ENCODE measurements at regions of chr15 and their contacts with region 1.

Region 1: GRCh38 chr15:45611305-45611704 is 23.5 kb upstream of the SQOR start:
- DNase-seq: no peak
- ATAC-seq: no peak
- H3K4me3 ChIP-seq: no peak overlapping the region
- H3K27ac ChIP-seq: no peak overlapping the region
- H3K4me1 ChIP-seq: no peaks in the 10 kb centered on the region
- H3K27me3 ChIP-seq: no peaks in the 10 kb centered on the region

Region 2: GRCh38 chr15:45522328-45523160 is 88.8 kb before region 1 on chr15 and contains the start of gene SLC30A4:
- intact Hi-C with region 1: loop called (anchors 5 to 10 kb)
- DNase-seq: peak; percentile 78 to 88
- ATAC-seq: peak; percentile 92
- H3K4me3 ChIP-seq: peak within 1 kb of the TSS; percentile 76 to 95
- H3K27ac ChIP-seq: peak within 1 kb of the TSS in 1 of 2 donors; percentile 43
- H3K4me1 ChIP-seq: peaks cover 0 to 2% of the 10 kb centered on the region in 2 donors
- H3K27me3 ChIP-seq: no peaks in the 10 kb centered on the region
- total RNA-seq, gene SLC30A4: 8.2 to 10.2 TPM

Region 3: GRCh38 chr15:45648521-45649200 is 37.4 kb after region 1 on chr15:
- intact Hi-C with region 1: no loop called
- DNase-seq: no peak
- ATAC-seq: no peak
- H3K4me3 ChIP-seq: no peak overlapping the region
- H3K27ac ChIP-seq: no peak overlapping the region
- H3K4me1 ChIP-seq: peaks cover 9 to 10% of the 10 kb centered on the region in 2 donors
- H3K27me3 ChIP-seq: no peaks in the 10 kb centered on the region

Measured in aorta (tissue), 5 donors.